ENCODE measurements at regions of chr11 and their contacts with region 1.

Region 1: DNA sequence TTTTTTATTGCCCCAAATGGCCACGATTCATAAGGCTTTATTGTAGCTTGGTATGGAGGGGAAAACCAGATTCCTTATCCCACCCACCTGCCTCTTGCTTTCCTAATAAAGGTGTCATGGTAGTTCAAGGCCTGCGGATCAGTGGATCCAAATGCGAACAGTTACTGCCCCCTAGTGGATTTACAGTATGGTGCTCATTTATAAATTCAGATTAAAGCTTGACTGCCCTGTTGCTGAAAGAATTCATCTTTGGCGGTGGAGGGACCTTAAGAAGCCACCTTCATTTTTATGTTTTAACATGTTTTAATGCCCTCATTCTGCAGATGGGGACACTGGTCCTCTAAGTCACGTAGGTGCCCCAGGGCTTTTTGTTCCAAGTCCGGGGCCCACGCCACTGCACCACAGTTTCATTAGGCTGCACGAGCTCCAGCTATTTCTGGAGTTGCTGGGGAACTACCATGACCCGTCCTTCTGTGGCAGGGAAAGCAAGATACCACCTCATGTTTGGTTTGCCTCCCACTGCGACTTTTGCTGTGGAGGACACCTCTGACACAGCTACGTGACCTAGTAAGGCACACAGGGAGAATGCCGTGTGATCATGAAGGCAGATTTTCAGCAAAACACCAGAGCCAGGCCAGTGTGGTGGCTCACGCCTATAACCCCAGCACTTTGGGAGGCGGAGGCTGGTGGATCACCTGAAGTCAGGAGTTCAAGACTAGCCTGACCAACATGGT is 15.6 kb upstream of the INCENP start:
- DNase-seq: peak; percentile 69
- H3K4me3 ChIP-seq: no peak overlapping the region; a peak in 1 of 4 replicates
- H3K27ac ChIP-seq: no peak overlapping the region
- H3K4me1 ChIP-seq: peaks cover 0 to 3% of the 10 kb centered on the region in 2 experiments; a peak in 1 of 4 replicates
- H3K27me3 ChIP-seq: no peaks in the 10 kb centered on the region
- CTCF ChIP-seq: peak; percentile 87
- EP300 ChIP-seq: no peak
- RAD21 ChIP-seq: peak; percentile 92

Region 2: DNA sequence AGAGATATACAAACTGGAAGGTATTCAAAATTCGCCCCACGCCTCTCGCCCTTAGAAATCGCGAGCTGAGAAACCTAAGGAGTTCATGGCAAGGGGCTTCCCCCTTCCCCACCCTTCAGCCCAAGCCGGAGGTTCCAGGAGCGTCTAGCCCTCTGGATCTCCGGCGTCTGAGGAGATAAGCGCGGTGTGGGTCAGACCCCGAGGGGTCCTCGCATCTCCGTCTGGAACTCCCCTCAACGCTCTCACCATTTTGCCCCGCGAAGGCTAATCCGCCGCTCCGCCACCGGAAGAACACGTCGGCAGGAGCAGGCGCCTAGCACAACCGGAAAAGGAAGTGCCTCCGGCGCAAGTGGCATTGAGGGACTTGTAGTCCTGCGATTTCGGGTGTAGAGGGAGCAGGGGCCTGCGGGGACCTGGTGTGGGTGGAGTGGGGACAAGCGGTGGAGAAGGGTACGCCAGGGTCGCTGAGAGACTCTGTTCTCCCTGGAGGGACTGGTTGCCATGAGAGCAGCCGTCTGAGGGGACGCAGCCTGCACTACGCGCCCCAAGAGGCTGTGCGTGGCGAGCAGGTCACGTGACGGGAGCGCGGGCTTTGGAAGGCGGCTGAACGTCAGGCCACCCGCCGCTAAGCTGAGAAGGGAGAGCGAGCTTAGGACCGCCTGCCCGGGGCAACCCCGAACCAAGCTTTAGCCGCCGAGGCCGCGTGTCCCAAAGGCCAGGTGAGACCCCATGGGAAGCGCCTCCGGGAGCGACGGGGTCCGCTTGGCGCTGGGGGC is 315.7 kb before region 1 on chr11 and contains the starts of genes FEN1 and TMEM258:
- CTCF ChIA-PET with region 1: interaction called, 92 read pairs
- POLR2A ChIA-PET with region 1: interaction called, 4 read pairs
- DNase-seq: peak; percentile 88
- H3K4me3 ChIP-seq: peak within 1 kb of the TSS; percentile 95 to 98
- H3K27ac ChIP-seq: peak within 1 kb of the TSS; percentile 99 to 100
- H3K4me1 ChIP-seq: peaks cover 5 to 19% of the 10 kb centered on the region in 2 experiments; a peak in 3 of 4 replicates
- H3K27me3 ChIP-seq: no peaks in the 10 kb centered on the region
- CTCF ChIP-seq: no peak
- EP300 ChIP-seq: no peak
- RAD21 ChIP-seq: no peak
- polyA plus RNA-seq, gene FEN1: 35.9 and 39.5 TPM in 2 replicates
- polyA plus RNA-seq, gene TMEM258: 454 and 617 TPM in 2 replicates

Region 3: DNA sequence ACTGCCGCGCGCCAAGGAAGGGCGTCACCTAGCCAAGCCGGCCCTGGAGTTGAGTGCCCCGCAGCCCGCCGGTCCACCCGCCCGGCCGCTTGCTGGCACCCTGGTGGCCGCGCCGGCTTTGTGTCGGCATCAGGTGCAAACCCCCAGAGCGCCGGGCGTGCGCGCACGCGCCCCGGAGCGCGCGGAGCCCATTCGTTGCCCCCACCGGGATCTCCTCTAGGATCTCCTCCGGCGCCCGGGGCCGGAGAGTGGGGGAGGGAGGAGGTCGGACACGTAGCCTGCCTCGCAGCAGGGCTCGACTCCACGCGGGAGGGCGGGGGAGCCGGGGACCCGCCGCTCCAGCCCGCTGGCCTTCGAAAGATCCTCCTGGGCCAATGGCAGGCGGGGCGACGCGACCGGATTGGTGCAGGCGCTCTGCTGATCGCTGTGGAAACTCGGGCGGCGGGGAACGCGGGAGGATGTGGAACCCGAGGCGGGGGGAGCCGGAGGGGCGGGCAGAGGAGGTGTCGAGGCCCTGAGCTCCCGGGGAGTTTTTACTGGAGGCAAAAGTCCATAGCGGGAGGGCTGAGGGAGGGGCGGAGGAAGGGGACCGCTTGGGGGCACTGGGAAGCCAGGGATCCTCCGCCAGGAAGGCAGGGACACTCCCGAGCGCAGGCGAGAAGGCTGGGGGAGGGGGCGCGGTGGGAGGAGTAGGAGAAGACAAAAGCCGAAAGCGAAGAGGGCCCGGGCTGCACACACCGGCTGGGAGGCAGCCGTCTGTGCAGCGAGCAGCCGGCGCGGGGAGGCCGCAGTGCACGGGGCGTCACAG is 280.4 kb before region 1 on chr11 and contains the start of gene FADS2:
- CTCF ChIA-PET with region 1: interaction called, 11 read pairs
- POLR2A ChIA-PET with region 1: no interaction called
- DNase-seq: peak; percentile 93
- H3K4me3 ChIP-seq: peak within 1 kb of the TSS; percentile 70 to 96
- H3K27ac ChIP-seq: peak within 1 kb of the TSS; percentile 21 to 99
- H3K4me1 ChIP-seq: peaks cover 10 to 46% of the 10 kb centered on the region in 2 experiments; a peak in 3 of 4 replicates
- H3K27me3 ChIP-seq: no peaks in the 10 kb centered on the region
- CTCF ChIP-seq: no peak
- EP300 ChIP-seq: peak; percentile 16 to 32; a peak in 2 of 4 replicates
- RAD21 ChIP-seq: no peak
- polyA plus RNA-seq, gene FADS2: 67.8 and 77.1 TPM in 2 replicates

Region 4: DNA sequence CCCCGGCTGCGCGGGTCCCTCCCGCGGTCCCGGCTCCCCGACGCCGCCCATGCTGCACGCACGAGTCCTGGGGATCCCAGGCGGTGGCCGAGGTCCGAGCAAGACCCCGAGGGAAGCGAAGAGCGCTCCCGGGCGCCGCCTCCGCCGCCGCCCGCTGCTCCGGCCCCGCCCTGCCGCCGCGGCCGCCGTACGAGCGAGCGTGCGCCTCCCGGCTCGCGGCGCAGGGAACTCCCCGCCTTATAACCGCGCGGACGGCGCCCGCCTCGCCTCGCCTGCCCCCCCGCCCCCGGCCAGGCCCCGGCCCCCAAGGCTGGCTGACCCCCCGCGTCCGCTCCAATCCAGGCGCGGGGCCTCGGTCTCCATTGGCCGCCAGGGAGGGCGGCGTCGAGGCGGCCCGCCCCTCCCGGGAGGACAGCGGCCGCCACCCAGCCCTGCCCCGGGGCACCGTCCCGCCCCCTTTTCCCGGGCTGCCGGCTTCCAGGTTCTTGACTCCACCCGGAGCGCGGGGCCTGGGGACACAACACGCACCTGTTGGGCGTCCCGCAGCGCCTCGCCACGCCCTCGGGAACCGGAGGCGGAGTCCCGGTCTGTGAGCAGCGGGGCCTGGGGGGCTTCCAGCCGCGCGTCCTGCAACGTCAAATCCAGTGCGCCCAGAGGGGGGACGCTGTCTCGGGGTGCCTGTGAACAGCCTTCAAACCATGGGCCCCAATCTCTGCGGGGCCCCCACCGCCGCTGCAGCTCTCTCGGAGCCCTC is 216.7 kb before region 1 on chr11 and contains the start of gene FADS3:
- CTCF ChIA-PET with region 1: interaction called, 147 read pairs
- POLR2A ChIA-PET with region 1: no interaction called
- DNase-seq: peak; percentile 96
- H3K4me3 ChIP-seq: peak within 1 kb of the TSS; percentile 77 to 81
- H3K27ac ChIP-seq: peak within 1 kb of the TSS; percentile 24 to 31; a peak in 2 of 4 replicates
- H3K4me1 ChIP-seq: peaks cover 7 to 14% of the 10 kb centered on the region in 2 experiments; a peak in 3 of 4 replicates
- H3K27me3 ChIP-seq: no peaks in the 10 kb centered on the region
- CTCF ChIP-seq: no peak
- EP300 ChIP-seq: no peak
- RAD21 ChIP-seq: no peak
- polyA plus RNA-seq, gene FADS3: 93.3 and 116 TPM in 2 replicates

Region 5: DNA sequence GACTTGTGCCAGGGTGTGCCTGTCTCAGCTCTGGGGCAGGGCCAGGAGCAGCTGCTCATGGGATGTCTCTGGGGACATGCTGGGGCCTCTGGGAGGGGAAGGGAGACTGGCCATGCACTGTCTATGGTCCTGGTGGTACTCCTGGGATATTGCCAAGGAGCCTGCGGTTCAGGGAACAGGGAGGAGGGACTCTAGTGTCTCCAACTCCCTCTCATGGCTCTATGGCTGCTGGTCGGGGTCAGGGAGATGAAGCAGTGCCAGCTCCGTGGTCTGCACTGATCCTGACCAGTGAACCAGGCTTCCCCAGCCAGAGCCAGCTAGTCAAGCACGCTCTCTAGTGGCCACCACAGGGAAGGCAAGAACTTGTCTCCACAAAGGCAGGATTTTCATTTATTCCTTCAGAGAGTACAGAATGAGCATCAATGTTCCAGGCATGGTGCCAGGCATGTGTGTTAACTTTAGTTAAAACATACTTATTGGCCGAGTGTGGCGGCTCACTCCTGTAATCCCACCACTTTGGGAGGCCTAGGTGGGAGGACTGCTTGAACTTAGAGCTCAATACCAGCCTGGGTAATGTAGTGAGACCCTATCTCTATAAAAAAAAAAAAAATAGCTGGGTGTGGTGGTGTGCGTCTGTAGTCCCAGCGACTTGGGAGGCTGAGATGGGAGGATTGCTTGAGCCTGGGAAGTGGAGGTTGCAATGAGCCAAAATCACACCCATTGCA is 160.5 kb before region 1 on chr11:
- CTCF ChIA-PET with region 1: interaction called, 40 read pairs
- POLR2A ChIA-PET with region 1: interaction called, 6 read pairs
- DNase-seq: peak; percentile 87
- H3K4me3 ChIP-seq: no peak overlapping the region
- H3K27ac ChIP-seq: no peak overlapping the region; a peak in 1 of 4 replicates
- H3K4me1 ChIP-seq: peaks cover 11 to 18% of the 10 kb centered on the region in 2 experiments; a peak in 2 of 4 replicates
- H3K27me3 ChIP-seq: no peaks in the 10 kb centered on the region
- CTCF ChIP-seq: peak; percentile 95
- EP300 ChIP-seq: no peak
- RAD21 ChIP-seq: peak; percentile 100

Region 6: GRCh38 chr11:62088331-62088933 is 19.8 kb before region 1 on chr11:
- CTCF ChIA-PET with region 1: interaction called, 67 read pairs
- POLR2A ChIA-PET with region 1: no interaction called
- DNase-seq: no peak
- H3K4me3 ChIP-seq: no peak overlapping the region
- H3K27ac ChIP-seq: no peak overlapping the region
- H3K4me1 ChIP-seq: no peaks in the 10 kb centered on the region
- H3K27me3 ChIP-seq: no peaks in the 10 kb centered on the region
- CTCF ChIP-seq: no peak
- EP300 ChIP-seq: no peak
- RAD21 ChIP-seq: no peak